ENCODE measurements at regions of chr16 and their contacts with region 1.

Region 1: GRCh38 chr16:9258423-9259051 is 167.1 kb downstream of the HAPSTR1 start:
- DNase-seq: peak in 4 of 6 donors; percentile 18 to 51 (median 43)
- ATAC-seq: peak; percentile 44 to 64 (median 47)
- H3K4me3 ChIP-seq: no peak overlapping the region
- H3K27ac ChIP-seq: no peak overlapping the region
- H3K4me1 ChIP-seq: peaks cover 8 to 22% (median 20%) of the 10 kb centered on the region in 3 donors
- H3K27me3 ChIP-seq: no peaks in the 10 kb centered on the region
- CTCF ChIP-seq: peak; percentile 53 to 79 (median 68)

Region 2: GRCh38 chr16:9311303-9311954 is 52.9 kb after region 1 on chr16:
- intact Hi-C with region 1: loop called in 1 of 3 experiments (anchors 10 kb)
- DNase-seq: peak in 2 of 6 donors; percentile 35 to 45
- ATAC-seq: peak in 3 of 4 donors; percentile 44 to 56 (median 44)
- H3K4me3 ChIP-seq: no peak overlapping the region
- H3K27ac ChIP-seq: no peak overlapping the region
- H3K4me1 ChIP-seq: peaks cover 13 to 29% (median 21%) of the 10 kb centered on the region in 3 donors
- H3K27me3 ChIP-seq: no peaks in the 10 kb centered on the region
- CTCF ChIP-seq: no peak

Region 3: DNA sequence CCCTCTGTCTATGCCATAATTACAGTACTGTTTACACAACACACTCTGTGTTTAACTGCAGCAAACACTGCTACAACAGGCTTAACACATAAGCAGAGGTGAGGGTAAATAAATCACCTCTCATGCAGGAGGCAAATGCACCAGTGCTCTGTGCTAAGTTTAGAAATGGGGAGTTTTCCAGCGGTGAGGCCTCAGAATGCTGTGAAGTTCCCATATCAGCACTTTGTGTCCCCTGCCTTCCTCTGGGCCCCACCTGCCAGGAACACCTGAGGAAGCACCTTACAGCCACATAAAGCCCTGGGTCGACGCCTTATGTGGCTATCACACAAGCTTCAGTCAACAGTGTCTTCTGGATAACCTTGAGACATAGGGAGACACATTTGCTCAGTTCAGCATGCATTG is 137.4 kb after region 1 on chr16:
- intact Hi-C with region 1: no loop called
- DNase-seq: peak in 5 of 6 donors; percentile 24 to 64 (median 55)
- ATAC-seq: peak; percentile 86 to 95 (median 94)
- H3K4me3 ChIP-seq: no peak overlapping the region
- H3K27ac ChIP-seq: peak overlapping the region in 3 of 4 donors; percentile 17 to 51 (median 43)
- H3K4me1 ChIP-seq: peaks cover 11 to 14% (median 12%) of the 10 kb centered on the region in 3 donors
- H3K27me3 ChIP-seq: no peaks in the 10 kb centered on the region
- CTCF ChIP-seq: no peak

Region 4: DNA sequence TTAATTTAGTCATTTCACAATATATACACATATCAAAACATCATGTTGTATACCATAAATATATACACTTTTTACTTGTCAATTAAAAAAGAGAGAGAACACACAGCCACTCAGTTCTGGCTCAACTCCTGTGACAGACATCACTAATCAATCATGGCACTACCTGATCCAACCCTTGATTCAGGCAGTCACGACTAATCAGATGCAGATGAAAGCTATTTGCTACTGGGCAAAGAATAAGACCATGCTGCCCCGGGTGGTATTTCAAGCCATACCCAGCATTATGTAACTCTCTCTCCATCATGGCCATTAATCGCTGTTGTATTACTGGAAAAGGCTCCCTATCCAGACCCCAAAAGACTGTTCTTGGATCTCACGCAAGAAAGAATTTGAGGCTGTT is 178.6 kb after region 1 on chr16:
- intact Hi-C with region 1: loop called in 1 of 3 experiments (anchors 10 kb)
- DNase-seq: no peak
- ATAC-seq: peak in 2 of 4 donors; percentile 46 to 66
- H3K4me3 ChIP-seq: no peak overlapping the region
- H3K27ac ChIP-seq: no peak overlapping the region
- H3K4me1 ChIP-seq: peaks cover 0 to 9% (median 7%) of the 10 kb centered on the region in 3 donors
- H3K27me3 ChIP-seq: no peaks in the 10 kb centered on the region
- CTCF ChIP-seq: no peak

Region 5: DNA sequence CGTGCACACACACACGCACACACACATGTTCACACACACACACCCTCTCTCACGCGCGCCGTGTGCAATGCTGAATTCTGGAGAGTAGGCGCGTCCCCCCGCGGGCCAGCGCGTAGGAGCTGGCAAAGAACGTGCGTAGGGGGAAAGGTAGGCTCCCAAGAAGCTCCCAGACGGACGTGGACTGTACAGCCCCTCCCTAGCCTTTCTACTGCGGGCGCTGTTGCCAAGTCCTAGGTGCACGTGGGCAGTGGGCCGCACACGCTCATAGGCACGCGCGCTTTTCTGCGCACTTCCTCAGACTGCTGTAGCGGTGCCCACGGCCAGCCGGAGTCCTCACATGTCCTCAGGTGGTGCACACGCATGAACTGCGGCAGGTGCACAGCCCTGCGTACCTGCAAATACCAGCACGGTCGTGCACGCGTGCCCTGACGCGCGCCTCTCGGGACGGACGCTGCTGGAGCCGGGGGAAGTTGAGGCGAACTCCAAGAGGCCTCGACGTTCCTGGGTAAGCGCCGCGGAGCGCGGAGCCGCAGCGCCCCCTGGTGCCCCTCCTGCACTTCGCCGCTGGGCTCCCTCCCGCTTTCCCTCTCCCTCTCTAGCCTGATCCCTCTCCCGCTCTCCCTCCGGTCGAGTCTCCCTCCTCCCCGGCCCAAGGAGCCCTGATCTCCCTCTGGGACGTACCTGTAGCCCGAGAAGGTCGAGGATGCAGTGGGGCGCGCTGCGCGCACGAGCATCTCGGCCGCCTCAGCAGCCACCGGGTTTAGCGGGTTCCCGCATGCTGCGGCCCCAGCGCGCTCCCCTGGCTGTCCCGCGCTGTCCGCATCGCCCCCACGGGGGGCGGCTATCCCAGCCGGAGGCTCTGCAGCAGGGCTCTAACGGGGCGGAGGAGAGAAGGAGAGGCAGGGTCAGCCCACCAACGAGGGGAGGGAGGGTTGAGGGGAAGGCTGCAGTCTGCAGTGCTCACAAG is 922.9 kb after region 1 on chr16:
- intact Hi-C with region 1: loop called in 2 of 3 experiments (anchors 5 kb)
- DNase-seq: peak; percentile 50 to 91 (median 70)
- ATAC-seq: peak; percentile 95 to 97 (median 96)
- H3K4me3 ChIP-seq: peak overlapping the region in 2 of 4 donors; percentile 10 to 38
- H3K27ac ChIP-seq: no peak overlapping the region
- H3K4me1 ChIP-seq: no peaks in the 10 kb centered on the region
- H3K27me3 ChIP-seq: peaks cover 0 to 25% (median 2%) of the 10 kb centered on the region in 4 donors
- CTCF ChIP-seq: peak; percentile 89 to 91 (median 90)

Measured in pancreas (tissue), 10 donors.